Calu3 (cell line): ENCODE measurements at regions of chr7 and their contacts with region 1.

Region 1: GRCh38 chr7:23712368-23713284 is 2.6 kb downstream of the STK31 start:
- DNase-seq: no peak
- H3K4me3 Mint-ChIP-seq: peak overlapping the region; percentile 2
- H3K27ac Mint-ChIP-seq: peak overlapping the region; percentile 35
- H3K4me1 Mint-ChIP-seq: peaks cover 56% of the 10 kb centered on the region
- H3K27me3 Mint-ChIP-seq: no peaks in the 10 kb centered on the region
- CTCF ChIP-seq: peak; percentile 71

Region 2: GRCh38 chr7:23570592-23571200 is 141.9 kb before region 1 on chr7:
- CTCF ChIA-PET with region 1: interaction called, 15 read pairs
- intact Hi-C with region 1: loop called (anchors 1 kb)
- DNase-seq: peak; percentile 90
- H3K4me3 Mint-ChIP-seq: no peak overlapping the region
- H3K27ac Mint-ChIP-seq: no peak overlapping the region
- H3K4me1 Mint-ChIP-seq: no peaks in the 10 kb centered on the region
- H3K27me3 Mint-ChIP-seq: no peaks in the 10 kb centered on the region
- CTCF ChIP-seq: peak; percentile 96

Region 3: GRCh38 chr7:23654508-23654907 is 58.1 kb before region 1 on chr7:
- CTCF ChIA-PET with region 1: no interaction called
- intact Hi-C with region 1: loop called (anchors 1 kb)
- DNase-seq: peak; percentile 40
- H3K4me3 Mint-ChIP-seq: no peak overlapping the region
- H3K27ac Mint-ChIP-seq: no peak overlapping the region
- H3K4me1 Mint-ChIP-seq: peaks cover 9% of the 10 kb centered on the region
- H3K27me3 Mint-ChIP-seq: no peaks in the 10 kb centered on the region
- CTCF ChIP-seq: peak; percentile 30

Region 4: DNA sequence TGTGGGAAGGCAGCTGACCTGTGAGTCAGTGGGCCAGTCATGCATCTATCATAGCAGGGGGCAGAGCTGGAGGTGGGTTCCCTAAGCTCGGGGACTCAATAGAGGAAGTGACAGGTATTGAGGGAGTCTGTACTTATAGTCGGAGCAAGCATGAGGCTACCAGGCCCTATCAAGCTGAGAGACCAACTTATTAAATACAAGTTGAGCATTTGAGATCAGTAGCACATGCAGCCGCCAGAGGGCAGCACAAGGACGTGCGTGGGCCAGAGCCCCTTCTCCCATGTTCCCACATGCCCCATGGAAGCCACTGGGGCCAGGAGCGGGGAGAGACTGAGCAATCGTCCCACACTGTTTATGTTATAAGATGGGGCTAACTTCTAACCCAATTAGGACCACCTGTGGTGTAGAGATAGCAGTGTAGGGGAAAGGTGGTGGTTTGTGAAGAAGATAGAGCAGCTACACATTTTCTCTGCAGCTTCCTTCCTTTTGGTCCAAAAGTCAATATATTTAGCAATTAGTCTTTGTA is 15.6 kb before region 1 on chr7:
- CTCF ChIA-PET with region 1: interaction called, 22 read pairs
- intact Hi-C with region 1: no loop called
- DNase-seq: peak; percentile 84
- H3K4me3 Mint-ChIP-seq: no peak overlapping the region
- H3K27ac Mint-ChIP-seq: peak overlapping the region; percentile 1
- H3K4me1 Mint-ChIP-seq: peaks cover 14% of the 10 kb centered on the region
- H3K27me3 Mint-ChIP-seq: no peaks in the 10 kb centered on the region
- CTCF ChIP-seq: peak; percentile 91

Region 5: GRCh38 chr7:23863209-23863798 is 150.7 kb after region 1 on chr7:
- CTCF ChIA-PET with region 1: no interaction called
- intact Hi-C with region 1: loop called (anchors 2 kb)
- DNase-seq: peak; percentile 36
- H3K4me3 Mint-ChIP-seq: no peak overlapping the region
- H3K27ac Mint-ChIP-seq: no peak overlapping the region
- H3K4me1 Mint-ChIP-seq: peaks cover 13% of the 10 kb centered on the region
- H3K27me3 Mint-ChIP-seq: no peaks in the 10 kb centered on the region
- CTCF ChIP-seq: peak; percentile 75